Caco-2 (cell line): ENCODE measurements at regions of chr15 and their contacts with region 1.

Region 1: GRCh38 chr15:88657326-88658069 is 18.7 kb downstream of the ISG20 start:
- DNase-seq: peak in 1 of 2 experiments; percentile 63
- H3K4me3 ChIP-seq: no peak overlapping the region
- H3K4me3 Mint-ChIP-seq: no peak overlapping the region
- H3K27ac Mint-ChIP-seq: no peak overlapping the region
- H3K4me1 ChIP-seq: no peaks in the 10 kb centered on the region
- H3K4me1 Mint-ChIP-seq: no peaks in the 10 kb centered on the region
- H3K27me3 ChIP-seq: no peaks in the 10 kb centered on the region
- H3K27me3 Mint-ChIP-seq: peaks cover 7% of the 10 kb centered on the region
- CTCF ChIP-seq: peak; percentile 81 to 84

Region 2: DNA sequence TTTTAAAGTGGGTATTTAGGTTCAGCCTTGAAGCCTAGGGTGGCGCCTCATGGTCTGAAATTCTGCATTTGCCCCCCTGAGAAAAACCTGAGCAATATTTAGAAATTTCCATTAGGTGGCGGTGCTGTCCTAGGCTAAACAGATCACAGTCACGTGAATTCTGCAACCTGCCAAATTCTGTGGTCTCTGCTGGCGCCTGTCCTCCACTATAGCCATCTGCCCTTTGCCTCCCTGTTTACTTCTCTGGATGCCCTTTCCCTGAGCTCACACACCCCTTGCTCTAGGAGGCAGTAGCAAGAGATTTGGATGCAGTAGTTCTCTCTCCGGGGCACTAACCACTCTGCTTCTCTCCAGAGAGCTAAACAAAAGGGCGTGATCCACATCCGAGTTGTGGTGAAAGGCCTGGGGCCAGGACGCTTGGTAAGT is 180.8 kb before region 1 on chr15:
- CTCF ChIA-PET with region 1: no interaction called
- POLR2A ChIA-PET with region 1: no interaction called
- intact Hi-C with region 1: loop called (anchors 5 kb)
- DNase-seq: peak in 1 of 2 experiments; percentile 54
- H3K4me3 ChIP-seq: no peak overlapping the region
- H3K4me3 Mint-ChIP-seq: no peak overlapping the region
- H3K27ac Mint-ChIP-seq: no peak overlapping the region
- H3K4me1 ChIP-seq: no peaks in the 10 kb centered on the region
- H3K4me1 Mint-ChIP-seq: peaks cover 4% of the 10 kb centered on the region
- H3K27me3 ChIP-seq: no peaks in the 10 kb centered on the region
- H3K27me3 Mint-ChIP-seq: no peaks in the 10 kb centered on the region
- CTCF ChIP-seq: peak; percentile 65

Region 3: DNA sequence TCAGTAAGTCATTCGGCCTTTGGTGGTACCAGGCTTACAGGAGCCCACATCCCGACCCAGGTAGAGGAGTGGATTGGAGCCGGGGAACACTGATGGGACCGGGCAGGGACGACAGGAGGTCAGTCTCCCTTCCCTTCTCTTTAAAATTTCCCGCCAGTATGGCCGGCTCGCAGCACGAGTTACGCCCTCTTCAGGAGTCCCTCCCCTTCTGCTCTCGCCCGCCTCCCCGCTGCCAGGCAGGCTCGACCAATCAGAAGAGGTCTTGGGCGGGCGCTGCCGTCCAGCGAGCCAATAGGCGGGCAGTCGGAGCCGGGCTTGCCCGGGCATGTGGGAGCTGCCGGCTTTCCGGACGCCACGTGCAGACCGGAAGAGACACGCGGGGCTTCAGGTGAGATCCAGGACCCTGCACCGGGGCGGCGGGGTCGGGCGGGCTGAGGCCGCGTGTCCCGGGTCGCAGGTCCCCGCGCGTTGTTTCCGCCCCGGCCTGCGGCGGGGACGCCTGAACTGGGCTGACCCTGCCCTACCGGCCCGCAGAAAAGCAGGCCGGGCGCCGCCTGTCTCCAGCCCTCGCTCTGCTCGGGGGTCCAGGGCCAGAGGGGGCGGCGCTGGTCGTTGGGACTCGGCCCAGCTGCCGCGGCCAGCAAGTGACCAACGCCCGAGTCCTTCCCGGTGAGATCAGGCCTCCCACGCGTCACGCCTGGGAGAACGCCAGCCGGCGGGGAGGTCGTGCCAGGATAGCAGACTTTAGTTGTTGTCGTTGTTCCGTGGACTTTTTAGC is 36.3 kb before region 1 on chr15 and contains the start of gene AEN:
- CTCF ChIA-PET with region 1: interaction called, 4 read pairs
- POLR2A ChIA-PET with region 1: no interaction called
- intact Hi-C with region 1: loop called (anchors 1 kb)
- DNase-seq: peak; percentile 95 to 97
- H3K4me3 ChIP-seq: peak within 1 kb of the TSS; percentile 92
- H3K4me3 Mint-ChIP-seq: peak within 1 kb of the TSS; percentile 91
- H3K27ac Mint-ChIP-seq: peak within 1 kb of the TSS; percentile 89
- H3K4me1 ChIP-seq: peaks cover 7% of the 10 kb centered on the region; the same call in 1 of the 2 replicates
- H3K4me1 Mint-ChIP-seq: peaks cover 24% of the 10 kb centered on the region
- H3K27me3 ChIP-seq: no peaks in the 10 kb centered on the region
- H3K27me3 Mint-ChIP-seq: no peaks in the 10 kb centered on the region
- CTCF ChIP-seq: peak in 1 of 2 experiments; percentile 7
- total RNA-seq, gene AEN: 28.7 and 33.2 TPM in 2 replicates

Region 4: DNA sequence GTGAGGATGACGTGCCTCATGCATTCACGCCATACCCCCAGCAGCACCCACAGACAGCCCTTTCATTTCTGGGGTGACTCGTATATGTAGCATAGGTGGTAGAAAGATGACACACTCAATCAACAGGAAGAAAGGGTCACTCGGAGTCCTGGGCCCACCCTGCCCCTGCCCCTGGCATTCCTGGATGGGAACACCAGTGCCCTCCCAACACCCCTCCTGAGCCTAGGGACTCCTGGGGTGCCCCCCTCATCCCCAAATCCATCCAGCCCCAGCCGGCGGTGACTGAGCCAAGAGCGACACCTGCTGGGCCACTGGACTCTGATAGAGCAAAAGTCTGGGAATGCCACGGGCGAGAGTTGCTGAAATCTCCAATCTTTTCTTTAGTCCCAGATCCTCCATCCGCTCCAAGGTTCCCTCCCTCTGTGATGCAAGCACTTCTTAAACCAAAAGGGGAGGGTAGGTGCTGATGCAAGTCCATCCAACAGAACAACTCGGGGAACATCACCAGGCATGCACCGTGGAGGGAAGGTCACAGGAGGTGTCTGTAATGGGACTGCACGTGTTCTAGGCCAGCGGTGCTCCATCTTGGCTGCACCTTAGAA is 176.8 kb after region 1 on chr15:
- CTCF ChIA-PET with region 1: interaction called, 9 read pairs
- POLR2A ChIA-PET with region 1: no interaction called
- intact Hi-C with region 1: loop called (anchors 1 kb)
- DNase-seq: peak in 1 of 2 experiments; percentile 18
- H3K4me3 ChIP-seq: no peak overlapping the region
- H3K4me3 Mint-ChIP-seq: no peak overlapping the region
- H3K27ac Mint-ChIP-seq: no peak overlapping the region
- H3K4me1 ChIP-seq: no peaks in the 10 kb centered on the region
- H3K4me1 Mint-ChIP-seq: no peaks in the 10 kb centered on the region
- H3K27me3 ChIP-seq: no peaks in the 10 kb centered on the region
- H3K27me3 Mint-ChIP-seq: no peaks in the 10 kb centered on the region
- CTCF ChIP-seq: peak; percentile 17 to 40

Region 5: DNA sequence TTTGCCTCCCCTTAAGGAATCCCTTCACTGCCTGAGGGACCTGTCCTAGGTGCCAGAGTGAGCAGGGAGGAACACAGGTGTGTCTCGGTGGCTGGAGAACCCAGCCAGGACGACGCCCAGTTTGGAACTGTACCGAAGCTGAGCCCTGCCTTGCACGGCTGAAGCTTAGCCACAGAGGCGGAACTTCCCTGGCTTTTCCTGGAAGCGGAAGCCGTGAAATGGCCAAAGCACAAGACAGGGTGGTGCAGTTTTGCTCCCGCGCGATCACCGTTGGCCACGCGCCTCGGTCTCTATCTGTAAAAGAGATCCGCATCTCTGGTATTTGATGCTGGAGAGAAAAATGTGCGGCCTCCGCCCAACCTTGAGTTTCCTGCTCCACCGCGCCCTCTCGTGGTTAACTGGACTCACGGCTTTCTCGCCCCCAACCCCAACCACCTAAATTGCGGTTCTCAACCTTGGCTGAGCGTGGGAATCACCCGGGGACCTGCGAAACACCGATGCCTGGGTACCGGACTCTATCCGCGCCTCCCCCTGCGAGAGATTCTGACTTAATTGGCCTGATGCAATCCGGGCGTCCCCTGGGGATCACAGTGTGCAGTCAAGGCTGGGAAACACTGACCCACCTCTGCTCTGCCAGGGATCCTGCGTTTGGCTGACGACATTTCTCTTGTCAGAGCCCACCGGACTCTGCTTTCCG is 360.0 kb after region 1 on chr15:
- CTCF ChIA-PET with region 1: no interaction called
- POLR2A ChIA-PET with region 1: no interaction called
- intact Hi-C with region 1: loop called (anchors 5 kb)
- DNase-seq: peak; percentile 83 to 88
- H3K4me3 ChIP-seq: peak overlapping the region; percentile 43
- H3K4me3 Mint-ChIP-seq: peak overlapping the region; percentile 73
- H3K27ac Mint-ChIP-seq: peak overlapping the region; percentile 39
- H3K4me1 ChIP-seq: no peaks in the 10 kb centered on the region
- H3K4me1 Mint-ChIP-seq: peaks cover 7% of the 10 kb centered on the region
- H3K27me3 ChIP-seq: no peaks in the 10 kb centered on the region
- H3K27me3 Mint-ChIP-seq: no peaks in the 10 kb centered on the region
- CTCF ChIP-seq: peak; percentile 75 to 84